Activated naive CD4-positive, alpha-beta T cell treated with anti-CD3 and anti-CD28 coated beads for 36 hours (primary cell): ENCODE measurements at regions of chr5 and their contacts with region 1.

Region 1: DNA sequence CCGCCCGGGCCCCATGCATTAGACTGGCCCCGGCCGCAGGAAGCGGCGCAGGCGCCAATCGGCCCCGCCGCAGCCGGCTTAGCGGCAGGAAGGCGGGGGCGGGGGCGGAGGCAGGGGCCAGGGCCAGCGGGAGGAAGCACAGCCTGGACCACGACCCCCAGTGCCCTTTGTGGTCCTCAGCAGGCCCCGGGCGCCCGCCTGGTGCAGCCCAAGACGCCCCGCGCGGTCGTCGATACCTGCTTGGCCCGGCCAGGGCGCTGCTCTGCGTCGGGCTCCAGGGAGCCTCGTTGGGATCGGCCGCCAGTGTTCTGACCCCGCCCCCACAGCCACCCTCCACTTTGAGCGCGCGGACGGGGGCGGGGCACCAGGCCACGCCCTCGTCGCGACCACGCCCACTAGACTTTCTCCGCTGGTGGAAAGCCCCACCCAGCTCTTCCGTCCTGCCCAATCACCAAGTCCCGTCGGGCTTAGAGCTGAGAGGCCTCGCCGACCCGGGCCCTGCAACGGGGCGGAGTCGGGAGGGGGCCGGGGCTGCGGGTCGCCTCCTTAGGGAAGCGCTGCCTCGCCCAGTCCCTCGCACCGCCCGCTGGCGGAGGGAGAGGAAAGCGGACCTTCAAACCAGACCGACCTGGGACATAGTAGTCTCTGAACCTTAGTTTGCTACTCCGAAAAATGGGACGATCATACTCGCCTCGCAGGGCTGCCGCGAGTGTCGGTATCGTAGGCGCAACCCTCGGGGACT is at the start of gene PDLIM7:
- DNase-seq: peak; percentile 96
- H3K4me3 Mint-ChIP-seq: peak within 1 kb of the TSS; percentile 84
- H3K27ac Mint-ChIP-seq: no peak within 1 kb of the TSS
- H3K4me1 Mint-ChIP-seq: peaks cover 35% of the 10 kb centered on the region
- H3K27me3 Mint-ChIP-seq: peaks cover 14% of the 10 kb centered on the region
- total RNA-seq, gene PDLIM7: 41.2 to 42.2 TPM

Region 2: DNA sequence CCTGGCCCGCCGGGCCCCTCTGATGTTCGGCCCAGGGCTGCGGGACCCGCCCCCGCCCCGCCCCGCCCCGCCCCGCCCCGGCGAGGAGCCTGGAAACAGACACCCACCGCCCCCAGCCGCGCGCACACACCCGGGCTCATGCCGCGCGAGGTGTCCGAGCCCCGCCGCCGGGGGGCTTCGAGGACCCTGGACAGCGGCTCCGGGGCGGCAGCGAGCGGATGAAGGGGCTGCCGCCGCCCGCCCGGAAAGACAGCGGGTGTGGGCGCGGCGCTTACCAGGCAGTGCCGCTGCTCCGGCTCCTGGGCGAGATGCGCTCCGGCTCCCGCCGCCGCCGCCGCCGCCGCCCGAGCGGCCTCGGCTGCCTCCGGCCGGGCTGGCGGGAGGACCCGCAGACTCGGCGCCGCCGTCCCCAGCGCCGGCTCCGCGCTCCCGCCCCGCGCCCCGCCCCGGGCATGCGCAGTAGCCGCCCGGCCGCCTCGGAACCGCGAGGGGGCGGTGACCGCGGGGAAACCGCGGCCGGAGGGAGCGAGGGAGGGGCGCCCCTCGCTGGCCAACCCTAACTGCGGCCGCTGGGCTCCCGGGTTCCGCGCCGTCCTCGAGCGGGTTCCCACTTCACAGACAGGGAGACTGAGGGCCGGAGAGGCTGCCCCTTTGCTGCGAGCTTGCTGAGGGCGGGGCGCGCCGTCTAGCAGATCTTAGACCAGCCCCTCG is 887.6 kb before region 1 on chr5 and contains the start of gene GPRIN1:
- CTCF ChIA-PET with region 1: no interaction called
- intact Hi-C with region 1: no loop called
- DNase-seq: peak; percentile 61
- H3K4me3 Mint-ChIP-seq: peak within 1 kb of the TSS; percentile 89
- H3K27ac Mint-ChIP-seq: peak within 1 kb of the TSS; percentile 63
- H3K4me1 Mint-ChIP-seq: peaks cover 7% of the 10 kb centered on the region
- H3K27me3 Mint-ChIP-seq: peaks cover 24% of the 10 kb centered on the region
- total RNA-seq, gene GPRIN1: 1.4 to 1.5 TPM

Region 3: GRCh38 chr5:177133091-177133852 is 364.2 kb before region 1 on chr5 and contains the start of gene NSD1:
- CTCF ChIA-PET with region 1: no interaction called
- intact Hi-C with region 1: loop called (anchors 1 kb)
- DNase-seq: peak; percentile 90
- H3K4me3 Mint-ChIP-seq: peak within 1 kb of the TSS; percentile 88
- H3K27ac Mint-ChIP-seq: peak within 1 kb of the TSS; percentile 88
- H3K4me1 Mint-ChIP-seq: peaks cover 52% of the 10 kb centered on the region
- H3K27me3 Mint-ChIP-seq: no peaks in the 10 kb centered on the region
- total RNA-seq, gene NSD1: 50.2 to 51.7 TPM

Region 4: GRCh38 chr5:177317959-177318377 is 179.5 kb before region 1 on chr5:
- CTCF ChIA-PET with region 1: interaction called, 9 read pairs
- intact Hi-C with region 1: loop called (anchors 2 kb)
- DNase-seq: peak; percentile 90
- H3K4me3 Mint-ChIP-seq: no peak overlapping the region
- H3K27ac Mint-ChIP-seq: no peak overlapping the region
- H3K4me1 Mint-ChIP-seq: peaks cover 19% of the 10 kb centered on the region
- H3K27me3 Mint-ChIP-seq: no peaks in the 10 kb centered on the region

Region 5: GRCh38 chr5:177454397-177455035 is 42.9 kb before region 1 on chr5:
- CTCF ChIA-PET with region 1: interaction called, 27 read pairs
- intact Hi-C with region 1: loop called (anchors 1 kb)
- DNase-seq: peak; percentile 91
- H3K4me3 Mint-ChIP-seq: peak overlapping the region; percentile 79
- H3K27ac Mint-ChIP-seq: no peak overlapping the region
- H3K4me1 Mint-ChIP-seq: peaks cover 20% of the 10 kb centered on the region
- H3K27me3 Mint-ChIP-seq: no peaks in the 10 kb centered on the region

Region 6: GRCh38 chr5:177473461-177474001 is 23.9 kb before region 1 on chr5 and contains the start of gene DBN1:
- CTCF ChIA-PET with region 1: interaction called, 6 read pairs
- intact Hi-C with region 1: loop called (anchors 1 kb)
- DNase-seq: no peak
- H3K4me3 Mint-ChIP-seq: peak within 1 kb of the TSS; percentile 72
- H3K27ac Mint-ChIP-seq: no peak within 1 kb of the TSS
- H3K4me1 Mint-ChIP-seq: peaks cover 49% of the 10 kb centered on the region
- H3K27me3 Mint-ChIP-seq: peaks cover 2% of the 10 kb centered on the region
- total RNA-seq, gene DBN1: 20.8 to 22.4 TPM

Region 7: DNA sequence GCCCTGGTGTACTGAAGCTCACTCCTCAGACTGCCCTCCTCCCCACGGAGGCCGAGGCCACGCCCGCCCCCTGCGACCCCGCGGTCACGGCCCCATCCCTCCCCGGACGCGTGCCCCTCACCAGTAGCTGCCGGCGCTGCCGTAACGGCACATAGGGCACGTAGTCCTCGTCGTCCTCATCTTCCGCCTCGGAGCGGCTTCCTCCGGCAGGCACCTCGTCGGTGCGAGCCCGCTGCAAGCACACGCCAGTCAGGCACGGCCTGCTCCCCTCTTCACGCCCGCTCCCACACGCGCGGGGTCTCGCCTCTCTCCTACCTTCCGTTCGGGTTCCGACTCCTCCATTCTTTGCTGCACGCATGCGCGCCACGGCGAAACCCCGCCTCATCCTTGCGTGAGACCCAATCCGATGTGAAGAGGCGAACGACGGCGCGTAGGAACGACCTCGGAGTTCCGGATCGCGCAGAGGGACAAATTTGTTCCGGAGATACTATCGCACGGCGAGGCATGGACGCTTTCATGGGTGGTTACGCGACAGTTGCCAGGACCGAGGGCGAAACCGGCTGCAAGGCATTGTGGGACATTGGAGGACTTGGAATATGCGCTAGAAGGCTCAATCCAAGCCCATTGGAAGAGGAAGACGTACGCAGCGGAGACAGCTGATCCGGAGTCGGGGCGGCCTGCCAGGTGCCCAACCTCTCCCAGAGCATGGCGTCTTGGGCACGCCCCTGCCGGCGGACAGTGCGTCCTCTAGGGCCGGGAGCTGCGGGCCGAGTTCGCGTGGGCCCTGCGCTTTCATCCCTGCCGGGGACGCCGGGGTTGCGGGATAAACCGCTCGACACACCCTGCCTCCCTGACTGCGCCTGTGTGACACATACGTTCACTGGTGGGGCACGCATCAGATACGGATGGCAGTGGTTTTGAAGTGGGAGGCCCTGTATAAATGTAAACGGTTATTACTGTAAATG is 19.4 kb after region 1 on chr5 and contains the start of gene DDX41:
- CTCF ChIA-PET with region 1: interaction called, 15 read pairs
- intact Hi-C with region 1: no loop called
- DNase-seq: peak; percentile 97
- H3K4me3 Mint-ChIP-seq: peak within 1 kb of the TSS; percentile 94
- H3K27ac Mint-ChIP-seq: peak within 1 kb of the TSS; percentile 87
- H3K4me1 Mint-ChIP-seq: peaks cover 54% of the 10 kb centered on the region
- H3K27me3 Mint-ChIP-seq: no peaks in the 10 kb centered on the region
- total RNA-seq, gene DDX41: 142 to 147 TPM